Mammary epithelial cell (primary cell): ENCODE measurements at regions of chr12 and their contacts with region 1.

Region 1: GRCh38 chr12:8226355-8226754 is 1.1 kb downstream of the FAM90A1 start:
- DNase-seq: no peak
- H3K4me3 ChIP-seq: no peak overlapping the region
- H3K27ac ChIP-seq: no peak overlapping the region
- H3K4me1 ChIP-seq: no peaks in the 10 kb centered on the region
- H3K27me3 ChIP-seq: no peaks in the 10 kb centered on the region
- CTCF ChIP-seq: no peak

Region 2: DNA sequence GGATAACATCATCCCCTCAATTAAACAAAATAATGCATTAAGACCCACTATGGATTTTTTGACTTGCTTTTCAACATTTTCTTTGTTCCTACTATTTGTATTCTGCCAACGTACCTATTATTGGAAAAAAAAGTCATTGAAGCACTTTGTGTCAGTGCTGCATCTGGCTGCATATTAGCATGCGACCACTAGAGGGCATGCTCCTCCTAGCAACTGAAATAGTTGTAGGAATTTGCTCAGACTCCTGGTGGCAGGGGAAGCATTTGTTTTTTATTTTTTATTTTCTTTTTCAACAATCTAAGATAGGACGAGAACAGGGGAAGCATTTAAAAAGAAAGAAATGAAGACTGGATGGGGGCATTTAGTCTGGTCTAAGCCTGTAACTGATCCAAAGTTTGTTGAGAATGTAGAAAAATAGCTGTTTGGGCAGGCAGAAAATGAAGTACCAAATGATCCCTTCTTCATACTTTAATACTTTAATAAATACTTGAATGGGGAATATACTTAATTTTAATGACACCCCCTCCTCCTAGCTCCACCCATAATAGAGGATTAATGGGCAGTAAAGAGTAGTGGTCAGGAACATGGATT is 117.5 kb before region 1 on chr12:
- CTCF ChIA-PET with region 1: interaction called, 8 read pairs
- dilution Hi-C with region 1: no loop called
- in situ Hi-C with region 1: loop called (anchors 10 to 25 kb)
- intact Hi-C with region 1: loop called (anchors 1 kb)
- DNase-seq: peak; percentile 44
- H3K4me3 ChIP-seq: no peak overlapping the region
- H3K27ac ChIP-seq: no peak overlapping the region
- H3K4me1 ChIP-seq: no peaks in the 10 kb centered on the region
- H3K27me3 ChIP-seq: no peaks in the 10 kb centered on the region
- CTCF ChIP-seq: peak; percentile 98 to 99

Region 3: GRCh38 chr12:8145754-8146441 is 80.5 kb before region 1 on chr12:
- CTCF ChIA-PET with region 1: no interaction called
- dilution Hi-C with region 1: no loop called
- in situ Hi-C with region 1: no loop called
- intact Hi-C with region 1: no loop called
- DNase-seq: peak; percentile 4
- H3K4me3 ChIP-seq: no peak overlapping the region
- H3K27ac ChIP-seq: no peak overlapping the region
- H3K4me1 ChIP-seq: no peaks in the 10 kb centered on the region
- H3K27me3 ChIP-seq: no peaks in the 10 kb centered on the region
- CTCF ChIP-seq: no peak